ENCODE measurements at regions of chr11 and their contacts with region 1.

Region 1: GRCh38 chr11:112289588-112290492 is 29.2 kb upstream of the PLET1 start:
- DNase-seq: peak; percentile 77 to 90 (median 86)
- ATAC-seq: peak; percentile 99
- H3K4me3 ChIP-seq: peak overlapping the region; percentile 61
- H3K4me3 Mint-ChIP-seq: peak overlapping the region; percentile 74 to 87 (median 84)
- H3K27ac ChIP-seq: peak overlapping the region; percentile 66
- H3K27ac Mint-ChIP-seq: peak overlapping the region; percentile 0 to 88 (median 51)
- H3K4me1 ChIP-seq: peaks cover 0 to 5% of the 10 kb centered on the region in 2 donors
- H3K4me1 Mint-ChIP-seq: peaks cover 9 to 44% (median 38%) of the 10 kb centered on the region in 7 donors
- H3K27me3 ChIP-seq: no peaks in the 10 kb centered on the region
- H3K27me3 Mint-ChIP-seq: peaks cover 0 to 9% (median 0%) of the 10 kb centered on the region in 5 donors

Region 2: GRCh38 chr11:112453601-112454577 is 164.0 kb after region 1 on chr11:
- CTCF ChIA-PET with region 1: interaction called, 16 read pairs
- POLR2A ChIA-PET with region 1: no interaction called
- intact Hi-C with region 1: loop called (anchors 1 kb)
- DNase-seq: peak in 5 of 9 donors; percentile 6 to 31 (median 29)
- ATAC-seq: peak; percentile 67
- H3K4me3 ChIP-seq: no peak overlapping the region
- H3K4me3 Mint-ChIP-seq: no peak overlapping the region
- H3K27ac ChIP-seq: no peak overlapping the region
- H3K27ac Mint-ChIP-seq: no peak overlapping the region
- H3K4me1 ChIP-seq: no peaks in the 10 kb centered on the region
- H3K4me1 Mint-ChIP-seq: peaks cover 4 to 12% (median 6%) of the 10 kb centered on the region in 7 donors
- H3K27me3 ChIP-seq: no peaks in the 10 kb centered on the region
- H3K27me3 Mint-ChIP-seq: peaks cover 0 to 15% (median 3%) of the 10 kb centered on the region in 5 donors

Region 3: DNA sequence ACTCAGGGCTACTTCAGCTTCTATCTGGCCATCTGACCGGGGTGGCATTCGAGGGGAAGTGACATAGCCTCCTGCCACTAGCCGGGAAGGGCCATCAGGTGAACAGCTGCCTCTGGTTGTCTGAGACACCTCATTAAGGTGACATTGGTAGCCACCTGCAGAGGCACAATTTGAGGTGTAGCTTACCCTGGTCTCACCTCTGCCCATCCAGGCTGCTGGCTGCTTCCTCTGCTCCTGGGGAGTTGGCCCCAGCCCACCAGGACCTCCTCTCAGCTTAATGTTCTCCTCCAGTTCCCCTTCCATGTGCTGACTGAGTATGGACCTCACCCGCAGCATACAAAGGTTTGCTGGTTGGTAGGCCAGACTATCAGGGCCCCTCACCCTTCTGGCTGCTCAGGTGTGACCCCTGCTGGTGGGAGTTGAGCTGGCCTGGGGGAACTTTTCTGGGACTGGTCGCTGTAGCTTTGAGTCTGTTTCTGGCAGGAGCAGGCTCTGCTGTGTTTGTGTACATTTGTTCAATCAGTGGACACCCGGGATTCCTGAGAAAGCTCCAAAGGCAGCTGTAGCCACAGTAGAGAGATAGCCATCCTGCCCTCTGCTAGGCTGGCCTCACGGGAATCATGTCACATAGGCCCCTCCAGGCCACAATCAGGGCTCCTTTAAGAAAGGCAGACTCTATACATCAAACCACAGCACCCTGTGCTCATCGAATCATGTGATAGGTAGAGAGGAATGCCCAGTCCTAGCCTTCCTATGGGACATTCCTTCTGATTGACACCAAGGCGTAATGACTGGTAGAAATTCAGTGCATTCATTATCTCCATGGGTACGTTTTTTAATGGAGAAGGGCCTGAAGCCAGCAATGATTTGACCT is 265.9 kb after region 1 on chr11:
- CTCF ChIA-PET with region 1: interaction called, 43 read pairs
- POLR2A ChIA-PET with region 1: no interaction called
- intact Hi-C with region 1: loop called (anchors 1 kb)
- DNase-seq: peak; percentile 43 to 79 (median 64)
- ATAC-seq: peak; percentile 85
- H3K4me3 ChIP-seq: no peak overlapping the region
- H3K4me3 Mint-ChIP-seq: no peak overlapping the region
- H3K27ac ChIP-seq: no peak overlapping the region
- H3K27ac Mint-ChIP-seq: peak overlapping the region in 3 of 9 donors; percentile 26 to 84 (median 52)
- H3K4me1 ChIP-seq: no peaks in the 10 kb centered on the region
- H3K4me1 Mint-ChIP-seq: peaks cover 0 to 5% (median 4%) of the 10 kb centered on the region in 7 donors
- H3K27me3 ChIP-seq: no peaks in the 10 kb centered on the region
- H3K27me3 Mint-ChIP-seq: peaks cover 0 to 6% (median 0%) of the 10 kb centered on the region in 5 donors

Region 4: DNA sequence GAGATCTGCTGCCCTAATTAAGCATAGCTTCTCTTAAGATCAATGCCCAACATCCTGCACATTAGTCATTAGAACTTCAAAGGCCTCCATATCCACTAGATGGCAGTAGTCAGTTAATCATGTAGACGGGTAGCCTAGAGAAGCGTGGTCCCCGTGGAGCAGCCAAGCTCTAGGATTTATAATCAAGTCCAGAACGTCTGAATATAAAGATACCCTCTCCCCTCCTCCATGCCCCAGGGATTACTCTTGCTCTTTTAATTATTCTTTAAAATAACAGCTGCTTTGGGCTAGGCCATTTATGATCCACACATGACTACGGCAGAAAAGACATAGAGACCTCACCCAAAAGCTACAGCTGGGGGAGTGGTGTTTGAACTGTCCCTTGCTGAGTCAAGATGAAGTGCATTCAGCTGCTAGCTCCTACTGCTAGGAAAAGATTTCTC is 298.4 kb after region 1 on chr11:
- CTCF ChIA-PET with region 1: no interaction called
- POLR2A ChIA-PET with region 1: no interaction called
- intact Hi-C with region 1: loop called in 1 of 2 experiments (anchors 1 kb)
- DNase-seq: peak in 7 of 9 donors; percentile 21 to 53 (median 48)
- ATAC-seq: peak; percentile 78
- H3K4me3 ChIP-seq: no peak overlapping the region
- H3K4me3 Mint-ChIP-seq: peak overlapping the region in 4 of 10 donors; percentile 11 to 71 (median 46)
- H3K27ac ChIP-seq: no peak overlapping the region
- H3K27ac Mint-ChIP-seq: no peak overlapping the region
- H3K4me1 ChIP-seq: no peaks in the 10 kb centered on the region
- H3K4me1 Mint-ChIP-seq: peaks cover 0 to 6% (median 0%) of the 10 kb centered on the region in 7 donors
- H3K27me3 ChIP-seq: no peaks in the 10 kb centered on the region
- H3K27me3 Mint-ChIP-seq: peaks cover 0 to 5% (median 3%) of the 10 kb centered on the region in 5 donors

Region 5: GRCh38 chr11:112795142-112795815 is 505.4 kb after region 1 on chr11:
- CTCF ChIA-PET with region 1: no interaction called
- POLR2A ChIA-PET with region 1: no interaction called
- intact Hi-C with region 1: loop called in 1 of 2 experiments (anchors 1 kb)
- DNase-seq: peak in 2 of 9 donors; percentile 11 to 14
- ATAC-seq: no peak
- H3K4me3 ChIP-seq: no peak overlapping the region
- H3K4me3 Mint-ChIP-seq: no peak overlapping the region
- H3K27ac ChIP-seq: no peak overlapping the region
- H3K27ac Mint-ChIP-seq: no peak overlapping the region
- H3K4me1 ChIP-seq: no peaks in the 10 kb centered on the region
- H3K4me1 Mint-ChIP-seq: peaks cover 0 to 12% (median 4%) of the 10 kb centered on the region in 7 donors
- H3K27me3 ChIP-seq: no peaks in the 10 kb centered on the region
- H3K27me3 Mint-ChIP-seq: peaks cover 6 to 20% (median 13%) of the 10 kb centered on the region in 5 donors

Region 6: DNA sequence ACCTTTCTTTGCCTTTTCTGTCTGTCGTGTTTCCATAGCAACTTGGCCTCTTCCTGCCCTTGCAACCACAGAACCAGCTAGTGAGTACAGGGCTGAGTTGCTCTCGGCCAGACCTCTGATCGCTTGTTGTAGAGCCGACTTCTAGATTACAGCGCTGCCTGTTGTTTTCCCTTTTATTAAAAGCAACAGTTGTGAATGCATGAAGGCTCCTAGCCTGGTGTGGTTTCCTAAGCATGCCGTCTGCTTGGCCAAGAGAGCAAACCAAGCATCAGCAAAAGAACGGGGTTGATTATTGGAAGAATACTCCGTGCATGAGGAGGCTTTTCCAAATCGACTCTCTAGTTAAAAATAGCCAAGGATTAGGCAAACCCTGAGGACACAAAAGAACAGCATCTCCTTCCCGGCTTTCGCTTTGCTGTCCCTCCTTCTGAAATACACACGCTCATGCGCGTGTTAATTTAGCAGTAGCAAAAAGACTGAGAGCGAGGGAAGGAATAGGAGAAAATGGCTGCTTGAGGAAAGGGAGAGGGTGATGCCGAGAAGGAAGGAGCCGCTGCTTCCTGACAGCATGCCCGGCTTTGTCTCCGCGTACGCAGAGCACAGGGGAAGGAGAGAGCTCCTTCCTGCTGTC is 953.0 kb after region 1 on chr11:
- CTCF ChIA-PET with region 1: no interaction called
- POLR2A ChIA-PET with region 1: no interaction called
- intact Hi-C with region 1: loop called in 1 of 2 experiments (anchors 5 kb)
- DNase-seq: peak in 4 of 9 donors; percentile 3 to 23 (median 16)
- ATAC-seq: peak; percentile 38
- H3K4me3 ChIP-seq: peak overlapping the region; percentile 30
- H3K4me3 Mint-ChIP-seq: peak overlapping the region in 9 of 10 donors; percentile 24 to 81 (median 64)
- H3K27ac ChIP-seq: no peak overlapping the region
- H3K27ac Mint-ChIP-seq: peak overlapping the region in 3 of 9 donors; percentile 26 to 86 (median 85)
- H3K4me1 ChIP-seq: no peaks in the 10 kb centered on the region
- H3K4me1 Mint-ChIP-seq: peaks cover 0 to 16% (median 7%) of the 10 kb centered on the region in 7 donors
- H3K27me3 ChIP-seq: no peaks in the 10 kb centered on the region
- H3K27me3 Mint-ChIP-seq: peaks cover 21 to 51% (median 37%) of the 10 kb centered on the region in 5 donors

Region 7: DNA sequence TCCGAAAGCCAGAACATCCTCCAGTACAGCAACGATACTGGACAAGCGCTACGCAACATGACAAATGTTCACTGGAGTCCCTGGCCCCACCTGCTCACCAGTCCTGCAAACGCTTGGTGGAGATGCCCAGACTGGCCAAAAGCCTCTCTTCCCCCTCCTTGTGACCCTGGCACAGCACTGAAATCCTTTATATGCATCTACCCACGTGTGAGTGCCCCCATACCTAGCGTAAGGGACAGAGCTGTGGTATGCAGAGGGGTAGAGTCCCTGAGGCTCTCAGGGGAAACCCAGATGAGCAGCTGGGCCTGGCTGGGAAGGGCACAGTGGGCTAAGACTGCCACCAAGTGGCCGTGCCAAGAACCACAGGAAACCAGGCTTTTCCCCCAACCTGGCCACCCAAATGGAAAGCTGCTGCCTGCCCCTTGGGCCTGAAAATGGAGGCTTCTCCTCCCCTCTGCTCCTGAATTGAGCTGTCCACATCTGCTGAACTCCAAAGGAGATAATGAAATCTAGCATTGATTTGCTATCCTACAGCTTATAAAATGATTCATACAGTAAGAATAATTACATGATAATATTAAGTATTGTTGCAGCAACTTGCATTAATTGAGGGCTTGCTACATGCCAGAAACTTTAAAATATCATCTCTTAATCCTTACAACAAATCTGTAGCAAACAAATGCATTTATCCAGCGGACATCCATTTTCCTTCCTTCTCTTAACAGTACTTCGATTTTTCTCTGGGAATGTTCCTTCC is 999.8 kb after region 1 on chr11:
- CTCF ChIA-PET with region 1: interaction called, 8 read pairs
- POLR2A ChIA-PET with region 1: interaction called, 3 read pairs
- intact Hi-C with region 1: loop called (anchors 1 kb)
- DNase-seq: peak; percentile 22 to 69 (median 51)
- ATAC-seq: peak; percentile 90
- H3K4me3 ChIP-seq: no peak overlapping the region
- H3K4me3 Mint-ChIP-seq: no peak overlapping the region
- H3K27ac ChIP-seq: no peak overlapping the region
- H3K27ac Mint-ChIP-seq: no peak overlapping the region
- H3K4me1 ChIP-seq: no peaks in the 10 kb centered on the region
- H3K4me1 Mint-ChIP-seq: no peaks in the 10 kb centered on the region
- H3K27me3 ChIP-seq: no peaks in the 10 kb centered on the region
- H3K27me3 Mint-ChIP-seq: peaks cover 0 to 12% (median 8%) of the 10 kb centered on the region in 5 donors